RWPE1 (cell line): ENCODE measurements at regions of chr21 and their contacts with region 1.

Region 1: DNA sequence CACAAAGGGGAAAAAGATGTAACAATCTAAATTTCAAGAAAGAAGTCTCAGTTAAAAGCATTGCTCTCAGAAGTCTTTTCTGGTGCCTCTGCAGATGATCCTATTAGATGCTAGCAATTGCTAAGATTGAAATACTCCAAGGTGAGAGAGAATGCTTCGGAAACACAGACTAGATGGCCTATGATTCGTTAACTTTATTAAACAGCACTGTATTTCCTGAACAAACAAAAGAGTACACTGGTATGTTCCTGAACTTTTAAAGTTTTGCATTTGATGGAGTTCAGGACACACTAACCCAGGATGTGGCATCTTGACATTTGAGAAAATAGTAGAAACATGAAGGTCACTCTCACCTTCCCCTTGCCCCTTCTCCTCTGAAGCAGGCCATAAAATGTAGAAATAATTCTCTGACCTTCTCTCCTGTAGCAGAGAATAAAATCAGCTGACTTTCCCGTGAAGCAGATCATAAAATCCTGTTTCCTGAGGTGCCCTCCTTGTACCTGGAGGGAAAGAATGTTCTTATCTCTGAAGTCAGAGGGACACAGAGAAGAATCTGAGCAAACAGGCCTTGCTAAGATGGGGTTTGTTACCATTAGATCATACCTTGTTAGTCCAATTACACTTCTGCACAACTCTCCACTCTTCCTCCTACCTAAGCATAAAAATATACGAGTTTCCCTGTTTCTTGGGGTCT is 142.9 kb upstream of the USP25 start:
- DNase-seq: no peak
- H3K27ac ChIP-seq: no peak overlapping the region
- CTCF ChIP-seq: no peak

Region 2: GRCh38 chr21:14686466-14687267 is 900.2 kb before region 1 on chr21:
- CTCF ChIA-PET with region 1: interaction called, 10 read pairs
- POLR2A ChIA-PET with region 1: no interaction called
- DNase-seq: no peak
- H3K27ac ChIP-seq: no peak overlapping the region
- CTCF ChIP-seq: no peak